Transverse colon (tissue), 4 donors: ENCODE measurements at regions of chr2 and their contacts with region 1.

Region 1: GRCh38 chr2:72033636-72034035 is 114.0 kb downstream of the CYP26B1 start:
- DNase-seq: no peak
- H3K4me3 ChIP-seq: no peak overlapping the region
- H3K27ac ChIP-seq: no peak overlapping the region
- H3K4me1 ChIP-seq: no peaks in the 10 kb centered on the region
- H3K27me3 ChIP-seq: no peaks in the 10 kb centered on the region
- CTCF ChIP-seq: no peak
- EP300 ChIP-seq: no peak
- POLR2A ChIP-seq: no peak

Region 2: GRCh38 chr2:70516596-70516995 is 1517.0 kb before region 1 on chr2:
- in situ Hi-C with region 1: no loop called
- intact Hi-C with region 1: loop called (anchors 5 kb)
- DNase-seq: no peak
- H3K4me3 ChIP-seq: no peak overlapping the region
- H3K27ac ChIP-seq: no peak overlapping the region
- H3K4me1 ChIP-seq: peaks cover 13 to 49% (median 28%) of the 10 kb centered on the region in 4 donors
- H3K27me3 ChIP-seq: no peaks in the 10 kb centered on the region
- CTCF ChIP-seq: no peak
- EP300 ChIP-seq: no peak
- POLR2A ChIP-seq: no peak

Region 3: GRCh38 chr2:71210292-71210691 is 823.3 kb before region 1 on chr2:
- in situ Hi-C with region 1: no loop called
- intact Hi-C with region 1: no loop called
- DNase-seq: no peak
- H3K4me3 ChIP-seq: no peak overlapping the region
- H3K27ac ChIP-seq: no peak overlapping the region
- H3K4me1 ChIP-seq: no peaks in the 10 kb centered on the region
- H3K27me3 ChIP-seq: no peaks in the 10 kb centered on the region
- CTCF ChIP-seq: no peak
- EP300 ChIP-seq: no peak
- POLR2A ChIP-seq: no peak

Region 4: GRCh38 chr2:72057308-72057707 is 23.7 kb after region 1 on chr2:
- in situ Hi-C with region 1: no loop called
- intact Hi-C with region 1: loop called (anchors 2 kb)
- DNase-seq: no peak
- H3K4me3 ChIP-seq: no peak overlapping the region
- H3K27ac ChIP-seq: no peak overlapping the region
- H3K4me1 ChIP-seq: no peaks in the 10 kb centered on the region
- H3K27me3 ChIP-seq: no peaks in the 10 kb centered on the region
- CTCF ChIP-seq: no peak
- EP300 ChIP-seq: no peak
- POLR2A ChIP-seq: no peak